Aorta (tissue), 5 donors: ENCODE measurements at regions of chr20 and their contacts with region 1.

Region 1: GRCh38 chr20:50189681-50190582 is 698 bp upstream of the CEBPB start:
- DNase-seq: peak; percentile 94 to 97
- ATAC-seq: peak; percentile 86
- H3K4me3 ChIP-seq: peak overlapping the region; percentile 87 to 88
- H3K27ac ChIP-seq: peak overlapping the region; percentile 19 to 91
- H3K4me1 ChIP-seq: no peaks in the 10 kb centered on the region
- H3K27me3 ChIP-seq: no peaks in the 10 kb centered on the region

Region 2: DNA sequence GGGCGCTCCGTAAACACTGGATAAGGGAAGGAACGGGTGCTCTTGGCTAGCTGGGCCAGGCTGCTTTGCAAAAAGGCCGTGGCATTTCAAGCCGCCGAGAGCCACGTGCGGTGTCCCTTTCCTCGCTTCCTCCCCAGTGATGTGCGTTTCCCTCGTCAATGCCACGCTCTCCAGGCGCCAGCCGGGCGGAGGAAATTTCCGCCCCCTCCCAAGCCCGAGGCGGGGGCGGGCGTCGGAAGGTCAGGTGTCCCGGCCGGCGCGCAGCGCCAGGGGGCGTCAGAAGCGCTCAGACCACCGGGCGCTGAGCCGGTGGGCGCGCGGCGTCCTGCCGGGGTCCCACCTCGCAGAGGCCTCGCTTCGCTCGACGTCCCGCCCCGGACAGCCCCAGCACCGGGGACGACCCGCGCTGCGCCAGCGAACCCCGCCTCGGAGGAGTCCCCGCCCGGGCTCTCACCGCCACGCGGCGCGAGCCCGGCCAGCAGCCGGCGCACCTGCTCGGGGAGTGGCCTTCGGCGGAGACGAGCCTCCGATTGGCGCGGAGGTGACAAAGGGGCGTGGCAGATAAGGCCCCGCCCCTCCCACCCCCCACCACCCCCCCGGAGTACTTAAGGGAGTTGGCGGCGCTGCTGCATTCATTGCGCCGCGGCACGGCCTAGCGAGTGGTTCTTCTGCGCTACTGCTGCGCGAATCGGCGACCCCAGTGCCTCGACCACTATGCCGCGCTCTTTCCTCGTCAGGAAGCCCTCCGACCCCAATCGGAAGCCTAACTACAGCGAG is 207.4 kb before region 1 on chr20 and contains the start of gene SNAI1:
- intact Hi-C with region 1: no loop called
- DNase-seq: peak; percentile 83 to 92
- ATAC-seq: peak; percentile 79
- H3K4me3 ChIP-seq: no peak within 1 kb of the TSS
- H3K27ac ChIP-seq: no peak within 1 kb of the TSS
- H3K4me1 ChIP-seq: no peaks in the 10 kb centered on the region
- H3K27me3 ChIP-seq: peaks cover 0 to 1% of the 10 kb centered on the region in 2 donors
- total RNA-seq, gene SNAI1: 10.4 to 44.7 TPM

Region 3: GRCh38 chr20:50029697-50030461 is 160.1 kb before region 1 on chr20:
- intact Hi-C with region 1: no loop called
- DNase-seq: peak; percentile 92 to 94
- ATAC-seq: peak; percentile 12
- H3K4me3 ChIP-seq: no peak overlapping the region
- H3K27ac ChIP-seq: no peak overlapping the region
- H3K4me1 ChIP-seq: peaks cover 0 to 4% of the 10 kb centered on the region in 2 donors
- H3K27me3 ChIP-seq: no peaks in the 10 kb centered on the region

Region 4: GRCh38 chr20:50308513-50309279 is 118.8 kb after region 1 on chr20:
- intact Hi-C with region 1: loop called (anchors 5 to 10 kb)
- DNase-seq: peak; percentile 95 to 96
- ATAC-seq: peak; percentile 87
- H3K4me3 ChIP-seq: no peak overlapping the region
- H3K27ac ChIP-seq: peak overlapping the region; percentile 40 to 77
- H3K4me1 ChIP-seq: no peaks in the 10 kb centered on the region
- H3K27me3 ChIP-seq: no peaks in the 10 kb centered on the region

Region 5: GRCh38 chr20:50395258-50395729 is 205.4 kb after region 1 on chr20:
- intact Hi-C with region 1: loop called (anchors 5 to 10 kb)
- DNase-seq: peak; percentile 86 to 94
- ATAC-seq: peak; percentile 88
- H3K4me3 ChIP-seq: no peak overlapping the region
- H3K27ac ChIP-seq: peak overlapping the region; percentile 93 to 99
- H3K4me1 ChIP-seq: peaks cover 0 to 5% of the 10 kb centered on the region in 2 donors
- H3K27me3 ChIP-seq: no peaks in the 10 kb centered on the region

Region 6: DNA sequence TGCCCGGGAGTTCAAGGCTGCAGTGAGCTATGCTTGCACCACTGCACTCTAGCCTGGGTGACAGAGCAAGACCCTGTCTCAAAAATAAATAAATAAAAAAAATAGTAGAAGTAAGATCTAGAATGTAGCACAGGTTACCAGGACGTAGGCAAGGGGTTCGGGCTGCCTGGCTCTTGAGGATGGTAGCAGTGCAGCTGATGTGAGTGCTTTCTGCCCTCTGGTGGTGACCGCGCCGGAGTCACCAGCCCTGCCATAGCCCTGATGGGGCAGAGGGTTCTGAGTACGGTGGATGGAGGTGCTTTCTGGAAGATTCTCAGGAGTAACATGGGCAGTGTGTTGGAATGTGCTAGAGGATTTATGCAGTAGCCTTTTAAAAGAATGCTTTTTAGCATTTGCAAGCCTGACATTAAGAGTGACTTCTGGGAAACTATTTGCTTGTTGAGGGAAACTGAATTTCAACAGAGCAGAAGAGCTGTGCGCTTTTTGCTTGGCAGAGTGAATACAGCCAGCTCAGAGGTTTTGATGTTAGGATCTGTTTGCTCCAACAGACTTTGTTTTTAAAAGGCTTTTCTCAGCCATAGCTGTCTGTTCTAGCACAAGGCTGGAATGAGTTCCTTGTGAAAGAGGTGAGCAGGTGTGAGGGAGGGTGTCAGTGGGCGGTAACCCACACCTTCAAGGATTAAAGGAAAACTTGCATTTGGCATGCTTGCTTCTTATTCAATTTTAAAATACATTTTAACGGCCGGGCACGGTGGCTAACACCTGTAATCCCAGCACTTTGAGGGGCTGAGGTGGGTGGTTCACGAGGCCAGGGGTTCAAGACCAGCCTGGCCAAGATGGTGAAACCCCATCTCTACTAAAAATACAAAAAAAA is 386.2 kb after region 1 on chr20:
- intact Hi-C with region 1: loop called (anchors 2 to 5 kb)
- DNase-seq: peak; percentile 79 to 84
- ATAC-seq: peak; percentile 71
- H3K4me3 ChIP-seq: no peak overlapping the region
- H3K27ac ChIP-seq: no peak overlapping the region
- H3K4me1 ChIP-seq: peaks cover 0 to 3% of the 10 kb centered on the region in 2 donors
- H3K27me3 ChIP-seq: no peaks in the 10 kb centered on the region